SK-N-SH (cell line): ENCODE measurements at regions of chr3 and their contacts with region 1.

Region 1: GRCh38 chr3:42101048-42101447 is 9.9 kb downstream of the TRAK1 start:
- DNase-seq: no peak
- H3K4me3 ChIP-seq: no peak overlapping the region
- H3K27ac ChIP-seq: no peak overlapping the region
- H3K4me1 ChIP-seq: peaks cover 3 to 10% of the 10 kb centered on the region in 2 experiments; a peak in 3 of 4 replicates
- H3K27me3 ChIP-seq: no peaks in the 10 kb centered on the region
- CTCF ChIP-seq: no peak
- EP300 ChIP-seq: no peak
- RAD21 ChIP-seq: no peak

Region 2: DNA sequence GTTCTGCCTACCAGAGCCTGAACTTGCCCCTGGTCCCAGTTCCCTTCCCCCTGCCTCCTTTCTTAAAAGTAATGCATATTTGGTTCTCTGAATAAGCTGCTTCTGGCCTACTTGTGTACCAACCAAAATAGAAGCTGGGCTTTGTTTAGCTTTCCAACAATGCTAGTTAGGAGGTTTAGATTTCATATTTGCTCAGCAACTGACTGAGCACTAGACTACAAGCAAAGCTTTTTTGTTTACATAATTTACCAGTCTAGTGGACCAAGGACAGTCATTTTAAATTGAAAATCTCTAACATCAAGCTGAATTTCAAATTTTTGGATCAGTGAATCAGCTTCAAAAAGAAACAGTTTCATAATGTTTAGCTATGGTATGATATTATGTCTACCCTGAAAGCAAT is 470.3 kb before region 1 on chr3:
- CTCF ChIA-PET with region 1: no interaction called
- POLR2A ChIA-PET with region 1: no interaction called
- DNase-seq: no peak
- H3K4me3 ChIP-seq: no peak overlapping the region
- H3K27ac ChIP-seq: no peak overlapping the region
- H3K4me1 ChIP-seq: peaks cover 0 to 12% of the 10 kb centered on the region in 2 experiments; a peak in 1 of 4 replicates
- H3K27me3 ChIP-seq: no peaks in the 10 kb centered on the region
- CTCF ChIP-seq: no peak
- EP300 ChIP-seq: no peak
- RAD21 ChIP-seq: no peak

Region 3: GRCh38 chr3:41893977-41894376 is 207.1 kb before region 1 on chr3:
- CTCF ChIA-PET with region 1: interaction called, 121 read pairs
- POLR2A ChIA-PET with region 1: no interaction called
- DNase-seq: peak; percentile 55
- H3K4me3 ChIP-seq: no peak overlapping the region; a peak in 1 of 4 replicates
- H3K27ac ChIP-seq: no peak overlapping the region
- H3K4me1 ChIP-seq: peaks cover 0 to 7% of the 10 kb centered on the region in 2 experiments; a peak in 2 of 4 replicates
- H3K27me3 ChIP-seq: no peaks in the 10 kb centered on the region
- CTCF ChIP-seq: peak; percentile 66
- EP300 ChIP-seq: no peak
- RAD21 ChIP-seq: peak; percentile 76

Region 4: GRCh38 chr3:41997702-41998550 is 103.1 kb before region 1 on chr3:
- CTCF ChIA-PET with region 1: interaction called, 17 read pairs
- POLR2A ChIA-PET with region 1: no interaction called
- DNase-seq: no peak
- H3K4me3 ChIP-seq: no peak overlapping the region
- H3K27ac ChIP-seq: no peak overlapping the region
- H3K4me1 ChIP-seq: no peaks in the 10 kb centered on the region
- H3K27me3 ChIP-seq: no peaks in the 10 kb centered on the region
- CTCF ChIP-seq: peak; percentile 41; the same call in 1 of the 2 replicates
- EP300 ChIP-seq: no peak
- RAD21 ChIP-seq: no peak

Region 5: GRCh38 chr3:42036483-42036823 is 64.6 kb before region 1 on chr3:
- CTCF ChIA-PET with region 1: interaction called, 13 read pairs
- POLR2A ChIA-PET with region 1: no interaction called
- DNase-seq: peak; percentile 44
- H3K4me3 ChIP-seq: no peak overlapping the region
- H3K27ac ChIP-seq: peak overlapping the region; percentile 66 to 97
- H3K4me1 ChIP-seq: peaks cover 33 to 41% of the 10 kb centered on the region in 2 experiments; a peak in 3 of 4 replicates
- H3K27me3 ChIP-seq: no peaks in the 10 kb centered on the region
- CTCF ChIP-seq: no peak
- EP300 ChIP-seq: peak in 1 of 2 experiments; percentile 43; a peak in 2 of 4 replicates
- RAD21 ChIP-seq: no peak

Region 6: GRCh38 chr3:42066516-42067181 is 34.4 kb before region 1 on chr3:
- CTCF ChIA-PET with region 1: interaction called, 10 read pairs
- POLR2A ChIA-PET with region 1: no interaction called
- DNase-seq: peak; percentile 46
- H3K4me3 ChIP-seq: no peak overlapping the region
- H3K27ac ChIP-seq: peak overlapping the region in 1 of 2 experiments; percentile 87; a peak in 3 of 4 replicates
- H3K4me1 ChIP-seq: peaks cover 10 to 24% of the 10 kb centered on the region in 2 experiments; a peak in 3 of 4 replicates
- H3K27me3 ChIP-seq: no peaks in the 10 kb centered on the region
- CTCF ChIP-seq: no peak
- EP300 ChIP-seq: 0 out of 4 replicates have a peak, but pooled peaks of 1 of the 2 experiments have one; percentile 11
- RAD21 ChIP-seq: no peak

Region 7: DNA sequence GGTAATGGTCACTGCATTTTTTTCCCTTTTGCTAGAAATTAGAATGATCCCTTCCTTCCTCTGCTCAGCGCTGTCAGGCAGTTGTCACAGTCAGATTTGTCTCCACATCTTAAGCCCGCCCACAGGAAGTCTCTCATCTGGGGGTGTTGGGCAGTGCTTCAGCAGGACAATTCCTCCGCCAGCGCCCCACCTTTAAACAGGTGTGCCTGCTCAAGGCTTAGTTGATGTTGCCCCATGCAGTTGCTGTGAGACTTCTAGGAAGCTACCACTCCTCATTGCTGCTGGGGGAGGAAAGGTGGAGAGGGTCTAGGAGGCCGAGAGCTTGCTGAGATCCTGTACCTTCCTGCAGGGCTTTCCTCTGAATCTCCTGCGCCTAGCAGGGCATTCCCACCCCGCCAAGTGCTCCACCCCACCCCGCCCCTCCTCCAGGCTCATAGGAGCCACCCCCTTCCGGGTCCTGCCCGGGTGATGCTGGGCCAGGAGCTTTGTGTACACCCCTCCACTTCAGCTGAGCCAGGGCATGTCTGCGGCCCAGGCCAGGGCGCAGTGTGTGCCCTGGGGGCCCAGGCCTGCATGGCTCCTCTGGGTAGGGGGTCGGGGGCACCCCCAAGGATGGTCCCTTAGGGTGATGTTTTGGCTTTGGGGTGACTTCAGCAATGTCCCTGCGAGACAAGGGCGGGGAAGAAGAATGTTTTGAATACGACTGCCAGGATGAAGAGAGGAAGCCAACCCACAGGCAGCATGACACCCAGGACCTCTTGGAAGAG is 58.8 kb after region 1 on chr3:
- CTCF ChIA-PET with region 1: interaction called, 10 read pairs
- POLR2A ChIA-PET with region 1: no interaction called
- DNase-seq: peak; percentile 86
- H3K4me3 ChIP-seq: peak overlapping the region in 1 of 2 experiments; percentile 38; a peak in 2 of 4 replicates
- H3K27ac ChIP-seq: peak overlapping the region in 1 of 2 experiments; percentile 83; a peak in 2 of 4 replicates
- H3K4me1 ChIP-seq: peaks cover 3 to 35% of the 10 kb centered on the region in 2 experiments; a peak in 3 of 4 replicates
- H3K27me3 ChIP-seq: no peaks in the 10 kb centered on the region
- CTCF ChIP-seq: no peak
- EP300 ChIP-seq: no peak
- RAD21 ChIP-seq: no peak